Activated CD4-positive, alpha-beta memory T cell treated with anti-CD3 and anti-CD28 coated beads for 36 hours (primary cell): ENCODE measurements at regions of chr1 and their contacts with region 1.

Region 1: DNA sequence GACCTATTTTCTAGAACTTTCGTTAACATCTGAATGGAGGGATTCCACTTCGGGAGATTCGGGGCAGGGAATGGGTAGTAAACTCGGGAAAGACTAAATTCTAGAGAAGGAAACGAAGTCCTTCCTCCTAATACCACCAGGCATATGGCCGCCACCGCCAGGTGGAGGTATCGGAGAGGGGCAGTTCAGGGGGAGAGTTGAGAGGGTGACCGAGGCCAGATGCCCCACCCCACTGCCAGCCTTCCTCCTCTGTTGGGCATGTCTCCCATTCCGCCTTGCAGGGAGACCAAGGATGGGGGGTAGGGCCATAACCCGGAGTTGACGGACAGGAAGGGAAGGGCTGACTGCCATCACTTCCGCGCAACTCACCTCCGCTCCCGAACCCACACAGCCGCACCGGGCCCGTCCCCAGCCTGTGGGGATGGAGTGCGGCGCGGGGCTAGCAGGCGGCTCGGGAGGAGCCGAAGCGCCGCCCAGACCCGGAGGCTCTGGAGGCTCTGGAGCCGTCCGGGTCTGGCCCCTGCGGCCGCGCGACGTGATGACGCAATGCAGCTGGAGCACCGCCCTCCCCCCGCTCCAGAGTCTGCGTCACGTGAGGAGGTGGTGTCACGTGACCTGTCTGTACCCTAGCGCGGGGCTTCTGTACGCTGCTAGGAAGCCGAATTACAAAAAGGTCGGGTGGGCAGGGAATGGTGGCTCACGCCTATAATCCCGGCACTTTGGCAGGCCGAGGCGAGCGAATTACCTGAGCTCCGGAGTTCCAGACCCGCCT is at the start of gene KLHL12:
- DNase-seq: peak; percentile 97
- H3K4me3 Mint-ChIP-seq: peak within 1 kb of the TSS; percentile 92
- H3K27ac Mint-ChIP-seq: peak within 1 kb of the TSS; percentile 90
- H3K4me1 Mint-ChIP-seq: peaks cover 26% of the 10 kb centered on the region
- H3K27me3 Mint-ChIP-seq: no peaks in the 10 kb centered on the region
- total RNA-seq, gene KLHL12: 35.5 to 38.3 TPM

Region 2: DNA sequence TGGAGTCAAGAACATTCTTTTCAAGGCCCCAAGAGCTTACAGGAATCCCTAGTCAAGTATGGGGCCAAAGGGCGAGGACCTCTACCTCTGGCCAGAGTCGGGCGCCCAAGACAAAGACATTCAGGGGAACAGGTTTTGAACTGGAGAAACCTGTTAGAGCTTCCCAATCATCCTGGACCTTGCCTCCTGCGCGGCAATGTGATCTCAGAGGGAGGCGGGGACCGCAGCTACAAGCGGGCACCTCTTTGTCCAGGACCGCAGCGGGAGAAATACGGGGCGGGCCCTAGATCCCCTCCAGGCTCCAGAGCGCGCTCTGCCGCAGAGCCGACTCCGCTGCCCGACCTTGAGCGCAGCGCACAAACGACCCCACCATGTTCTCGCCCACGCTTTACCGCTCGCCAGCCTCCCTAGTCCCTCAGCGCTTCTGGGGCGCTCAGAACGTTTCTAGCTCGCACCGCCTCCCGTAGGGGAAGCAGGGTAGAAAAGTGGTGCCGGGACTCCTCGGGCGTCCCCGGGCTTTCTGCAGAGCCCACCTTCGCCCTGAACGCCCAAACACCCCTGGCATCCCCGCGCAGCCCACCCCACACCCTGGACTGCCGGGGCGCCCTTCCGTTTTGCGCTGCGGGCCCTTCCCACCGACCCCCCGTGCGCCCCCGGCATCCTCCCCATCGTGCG is 66.0 kb before region 1 on chr1:
- CTCF ChIA-PET with region 1: no interaction called
- POLR2A ChIA-PET with region 1: no interaction called
- intact Hi-C with region 1: no loop called
- DNase-seq: peak; percentile 51
- H3K4me3 Mint-ChIP-seq: peak overlapping the region; percentile 63
- H3K27ac Mint-ChIP-seq: no peak overlapping the region
- H3K4me1 Mint-ChIP-seq: peaks cover 8% of the 10 kb centered on the region
- H3K27me3 Mint-ChIP-seq: peaks cover 48% of the 10 kb centered on the region

Region 3: GRCh38 chr1:202871366-202871765 is 55.5 kb before region 1 on chr1:
- CTCF ChIA-PET with region 1: no interaction called
- POLR2A ChIA-PET with region 1: no interaction called
- intact Hi-C with region 1: no loop called
- DNase-seq: no peak
- H3K4me3 Mint-ChIP-seq: no peak overlapping the region
- H3K27ac Mint-ChIP-seq: no peak overlapping the region
- H3K4me1 Mint-ChIP-seq: no peaks in the 10 kb centered on the region
- H3K27me3 Mint-ChIP-seq: peaks cover 3% of the 10 kb centered on the region

Region 4: DNA sequence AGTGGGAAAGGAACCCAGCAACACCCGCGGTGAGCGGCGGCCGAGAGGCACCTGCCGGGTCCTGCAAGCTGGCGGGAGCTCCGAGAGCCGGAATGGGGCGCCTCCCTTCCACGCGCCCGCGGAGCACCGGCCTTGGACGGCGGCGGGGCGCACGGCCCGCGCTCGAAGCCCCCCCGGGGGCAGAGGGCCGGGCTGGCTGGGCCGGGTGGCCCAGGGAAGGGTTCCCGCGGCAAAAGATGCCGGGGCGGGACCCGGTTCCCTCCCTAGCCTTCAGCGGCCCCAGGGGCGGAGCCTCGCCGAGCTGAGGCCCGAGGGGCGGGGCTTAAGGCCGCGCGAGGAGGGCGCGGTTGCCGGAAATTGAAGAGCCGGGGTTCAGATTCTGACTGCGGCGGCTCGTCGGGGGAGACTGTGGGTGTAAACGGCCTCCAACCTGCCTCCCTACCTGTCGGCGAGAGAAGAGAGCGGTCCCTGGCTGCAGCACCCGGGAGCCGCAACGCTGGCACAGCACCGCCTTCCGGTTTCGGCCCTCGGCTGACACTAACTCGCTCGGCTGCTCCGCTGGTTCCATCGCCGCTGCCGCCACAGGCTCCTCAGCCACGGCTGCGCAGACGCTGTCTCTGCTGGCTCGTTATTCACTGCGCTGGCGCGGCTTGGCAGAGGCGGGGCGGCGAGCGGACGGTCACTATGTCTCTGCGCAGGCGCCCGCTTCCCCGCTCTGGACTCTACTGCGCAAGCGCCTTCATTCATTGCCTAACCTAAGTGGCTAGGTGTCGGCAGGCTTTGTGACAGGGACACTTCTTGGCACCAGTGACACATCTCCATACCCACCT is 38.2 kb before region 1 on chr1 and contains the start of gene RABIF:
- CTCF ChIA-PET with region 1: no interaction called
- POLR2A ChIA-PET with region 1: interaction called, 8 read pairs
- intact Hi-C with region 1: loop called (anchors 1 kb)
- DNase-seq: peak; percentile 98
- H3K4me3 Mint-ChIP-seq: peak within 1 kb of the TSS; percentile 93
- H3K27ac Mint-ChIP-seq: peak within 1 kb of the TSS; percentile 98
- H3K4me1 Mint-ChIP-seq: peaks cover 22% of the 10 kb centered on the region
- H3K27me3 Mint-ChIP-seq: no peaks in the 10 kb centered on the region
- total RNA-seq, gene RABIF: 9.6 to 10.1 TPM

Region 5: DNA sequence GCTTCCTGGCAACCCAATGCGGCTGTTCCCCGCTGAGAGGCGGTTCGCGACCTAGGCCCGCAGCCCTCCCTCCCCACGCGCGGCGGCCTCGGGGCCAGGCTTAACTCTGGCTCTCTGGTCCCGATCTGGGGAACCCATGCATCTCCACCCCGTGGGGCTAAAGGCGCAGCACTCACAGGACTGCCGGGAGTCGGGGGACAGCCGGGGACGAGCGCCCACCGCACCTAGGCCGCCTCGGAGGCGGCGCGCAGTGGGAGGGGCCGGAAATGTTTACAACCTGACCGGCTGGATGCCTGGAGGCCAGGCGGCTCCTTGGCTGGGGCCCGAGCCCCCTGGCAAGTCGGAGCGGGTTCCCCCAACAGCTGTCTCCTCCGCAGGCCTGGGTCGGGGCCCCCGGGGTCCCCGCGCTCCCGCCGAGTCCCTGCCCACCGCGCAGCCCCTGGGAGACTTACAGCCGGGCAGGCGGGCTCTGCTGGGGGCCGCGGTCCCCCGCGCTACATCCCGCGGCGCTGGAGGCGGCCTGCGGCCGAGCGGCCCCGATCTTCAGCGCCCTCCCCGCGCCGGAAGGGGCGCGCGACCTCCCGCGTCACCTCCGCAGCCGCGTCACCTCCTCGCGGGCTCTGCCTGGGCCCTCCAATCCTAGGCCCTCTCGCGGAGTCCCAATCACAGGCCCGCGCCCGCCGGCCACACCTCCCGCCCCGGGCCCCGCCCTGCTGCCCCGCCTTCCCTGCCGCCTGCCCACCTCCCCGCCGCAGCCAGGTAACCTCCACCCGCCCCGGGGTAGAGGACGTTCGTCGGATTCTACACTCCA is 31.0 kb after region 1 on chr1 and contains the start of gene ADIPOR1:
- CTCF ChIA-PET with region 1: interaction called, 3 read pairs
- POLR2A ChIA-PET with region 1: no interaction called
- intact Hi-C with region 1: loop called (anchors 2 kb)
- DNase-seq: peak; percentile 96
- H3K4me3 Mint-ChIP-seq: peak within 1 kb of the TSS; percentile 81
- H3K27ac Mint-ChIP-seq: peak within 1 kb of the TSS; percentile 64
- H3K4me1 Mint-ChIP-seq: peaks cover 46% of the 10 kb centered on the region
- H3K27me3 Mint-ChIP-seq: no peaks in the 10 kb centered on the region
- total RNA-seq, gene ADIPOR1: 75.2 to 76.6 TPM

Region 6: GRCh38 chr1:202998836-202999750 is 72.2 kb after region 1 on chr1:
- CTCF ChIA-PET with region 1: interaction called, 7 read pairs
- POLR2A ChIA-PET with region 1: no interaction called
- intact Hi-C with region 1: loop called (anchors 2 kb)
- DNase-seq: peak; percentile 63
- H3K4me3 Mint-ChIP-seq: peak overlapping the region; percentile 33
- H3K27ac Mint-ChIP-seq: no peak overlapping the region
- H3K4me1 Mint-ChIP-seq: peaks cover 10% of the 10 kb centered on the region
- H3K27me3 Mint-ChIP-seq: peaks cover 22% of the 10 kb centered on the region

Region 7: GRCh38 chr1:204190212-204191211 is 1263.6 kb after region 1 on chr1:
- CTCF ChIA-PET with region 1: no interaction called
- POLR2A ChIA-PET with region 1: no interaction called
- intact Hi-C with region 1: no loop called
- DNase-seq: peak; percentile 36
- H3K4me3 Mint-ChIP-seq: no peak overlapping the region
- H3K27ac Mint-ChIP-seq: no peak overlapping the region
- H3K4me1 Mint-ChIP-seq: peaks cover 13% of the 10 kb centered on the region
- H3K27me3 Mint-ChIP-seq: peaks cover 44% of the 10 kb centered on the region